Panc1 (cell line): ENCODE measurements at regions of chr12 and their contacts with region 1.

Region 1: GRCh38 chr12:123120452-123121166 is 30.3 kb downstream of the PITPNM2 start:
- DNase-seq: no peak
- ATAC-seq: peak; percentile 57
- H3K4me3 ChIP-seq: no peak overlapping the region
- H3K27ac ChIP-seq: no peak overlapping the region
- H3K4me1 ChIP-seq: 0 out of 2 replicates have a peak, but pooled peaks cover 6% of the 10 kb centered on the region
- H3K27me3 ChIP-seq: no peaks in the 10 kb centered on the region
- CTCF ChIP-seq: no peak

Region 2: DNA sequence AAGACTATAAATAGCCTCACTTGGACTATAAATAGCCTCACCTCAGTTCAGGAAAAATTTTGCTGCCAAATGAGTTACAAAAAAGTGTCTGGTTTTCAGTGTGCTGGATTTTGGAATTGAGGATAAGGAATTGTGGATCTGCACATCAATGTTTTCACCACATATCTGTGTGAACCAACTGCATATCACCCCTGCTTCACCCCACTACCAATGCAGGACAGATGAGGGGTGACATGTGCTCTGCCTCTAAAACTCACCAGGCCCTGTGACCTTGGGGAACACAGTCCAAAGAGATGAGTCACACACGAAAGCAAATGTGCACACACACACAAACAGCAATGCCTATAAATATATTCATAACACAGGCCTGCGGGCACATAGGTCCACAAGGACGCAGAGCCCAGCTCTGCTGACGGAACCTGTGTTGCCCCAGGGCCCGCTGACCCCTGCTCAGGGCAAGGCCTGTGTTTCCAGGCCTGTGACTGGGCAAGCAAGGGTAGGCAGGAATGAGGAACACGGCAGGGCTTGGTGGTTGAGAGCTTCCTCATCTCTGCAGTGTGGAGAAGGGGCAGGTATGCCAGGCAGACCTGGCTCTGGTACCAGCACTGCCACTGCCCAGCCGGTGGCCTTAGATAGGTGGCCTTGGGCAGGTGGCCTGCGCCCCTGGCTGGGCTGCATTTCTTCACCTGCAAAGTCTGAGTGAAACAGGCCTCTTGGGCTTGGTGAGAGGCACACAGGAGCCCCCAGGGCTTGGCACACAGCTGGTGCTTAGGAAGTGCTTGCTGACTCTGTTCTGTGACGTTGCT is 57.7 kb before region 1 on chr12:
- CTCF ChIA-PET with region 1: no interaction called
- POLR2A ChIA-PET with region 1: no interaction called
- in situ Hi-C with region 1: no loop called
- intact Hi-C with region 1: no loop called
- DNase-seq: no peak
- ATAC-seq: peak; percentile 73
- H3K4me3 ChIP-seq: no peak overlapping the region
- H3K27ac ChIP-seq: peak overlapping the region; percentile 66
- H3K4me1 ChIP-seq: peaks cover 39% of the 10 kb centered on the region
- H3K27me3 ChIP-seq: no peaks in the 10 kb centered on the region
- CTCF ChIP-seq: no peak

Region 3: GRCh38 chr12:123165537-123165936 is 44.9 kb after region 1 on chr12:
- CTCF ChIA-PET with region 1: interaction called, 12 read pairs
- POLR2A ChIA-PET with region 1: no interaction called
- in situ Hi-C with region 1: no loop called
- intact Hi-C with region 1: no loop called
- DNase-seq: no peak
- ATAC-seq: no peak
- H3K4me3 ChIP-seq: no peak overlapping the region
- H3K27ac ChIP-seq: no peak overlapping the region
- H3K4me1 ChIP-seq: no peaks in the 10 kb centered on the region
- H3K27me3 ChIP-seq: no peaks in the 10 kb centered on the region
- CTCF ChIP-seq: no peak